ENCODE measurements at regions of chr1 and their contacts with region 1.

Region 1: GRCh38 chr1:224329842-224330753 is at the start of gene NVL:
- DNase-seq: peak; percentile 80 to 88 (median 84)
- ATAC-seq: peak; percentile 98
- H3K4me3 ChIP-seq: peak within 1 kb of the TSS; percentile 89 to 93
- H3K27ac ChIP-seq: peak within 1 kb of the TSS; percentile 85 to 94 (median 93)
- H3K4me1 ChIP-seq: peaks cover 37% of the 10 kb centered on the region
- H3K27me3 ChIP-seq: no peaks in the 10 kb centered on the region
- CTCF ChIP-seq: no peak
- POLR2A ChIP-seq: peak in 2 of 3 donors; percentile 73 to 77
- total RNA-seq, gene NVL: 24.6 to 31.0 TPM

Region 2: GRCh38 chr1:224069138-224069537 is 261.0 kb before region 1 on chr1:
- intact Hi-C with region 1: no loop called
- DNase-seq: no peak
- ATAC-seq: no peak
- H3K4me3 ChIP-seq: no peak overlapping the region
- H3K27ac ChIP-seq: no peak overlapping the region
- H3K4me1 ChIP-seq: peaks cover 17% of the 10 kb centered on the region
- H3K27me3 ChIP-seq: no peaks in the 10 kb centered on the region
- CTCF ChIP-seq: no peak
- POLR2A ChIP-seq: no peak

Region 3: GRCh38 chr1:224113918-224114786 is 215.9 kb before region 1 on chr1 and contains the start of gene FBXO28:
- intact Hi-C with region 1: loop called (anchors 10 kb)
- DNase-seq: peak; percentile 93 to 95 (median 94)
- ATAC-seq: peak; percentile 100
- H3K4me3 ChIP-seq: peak within 1 kb of the TSS; percentile 84 to 87
- H3K27ac ChIP-seq: peak within 1 kb of the TSS; percentile 80 to 88 (median 82)
- H3K4me1 ChIP-seq: peaks cover 24% of the 10 kb centered on the region
- H3K27me3 ChIP-seq: no peaks in the 10 kb centered on the region
- CTCF ChIP-seq: peak in 1 of 7 experiments; percentile 7
- POLR2A ChIP-seq: peak; percentile 76 to 93 (median 92)
- total RNA-seq, gene FBXO28: 3.0 to 13.7 TPM

Region 4: GRCh38 chr1:224182866-224183590 is 147.1 kb before region 1 on chr1 and contains the start of gene DEGS1:
- intact Hi-C with region 1: loop called (anchors 10 kb)
- DNase-seq: peak; percentile 84 to 91 (median 88)
- ATAC-seq: peak; percentile 93
- H3K4me3 ChIP-seq: peak within 1 kb of the TSS; percentile 18 to 87
- H3K27ac ChIP-seq: peak within 1 kb of the TSS; percentile 66 to 95 (median 86)
- H3K4me1 ChIP-seq: peaks cover 25% of the 10 kb centered on the region
- H3K27me3 ChIP-seq: no peaks in the 10 kb centered on the region
- CTCF ChIP-seq: peak in 1 of 7 experiments; percentile 1
- POLR2A ChIP-seq: peak; percentile 84 to 87 (median 86)
- total RNA-seq, gene DEGS1: 16.3 to 18.5 TPM

Measured in body of pancreas (tissue), 4 donors.